Caco-2 (cell line): ENCODE measurements at regions of chr16 and their contacts with region 1.

Region 1: DNA sequence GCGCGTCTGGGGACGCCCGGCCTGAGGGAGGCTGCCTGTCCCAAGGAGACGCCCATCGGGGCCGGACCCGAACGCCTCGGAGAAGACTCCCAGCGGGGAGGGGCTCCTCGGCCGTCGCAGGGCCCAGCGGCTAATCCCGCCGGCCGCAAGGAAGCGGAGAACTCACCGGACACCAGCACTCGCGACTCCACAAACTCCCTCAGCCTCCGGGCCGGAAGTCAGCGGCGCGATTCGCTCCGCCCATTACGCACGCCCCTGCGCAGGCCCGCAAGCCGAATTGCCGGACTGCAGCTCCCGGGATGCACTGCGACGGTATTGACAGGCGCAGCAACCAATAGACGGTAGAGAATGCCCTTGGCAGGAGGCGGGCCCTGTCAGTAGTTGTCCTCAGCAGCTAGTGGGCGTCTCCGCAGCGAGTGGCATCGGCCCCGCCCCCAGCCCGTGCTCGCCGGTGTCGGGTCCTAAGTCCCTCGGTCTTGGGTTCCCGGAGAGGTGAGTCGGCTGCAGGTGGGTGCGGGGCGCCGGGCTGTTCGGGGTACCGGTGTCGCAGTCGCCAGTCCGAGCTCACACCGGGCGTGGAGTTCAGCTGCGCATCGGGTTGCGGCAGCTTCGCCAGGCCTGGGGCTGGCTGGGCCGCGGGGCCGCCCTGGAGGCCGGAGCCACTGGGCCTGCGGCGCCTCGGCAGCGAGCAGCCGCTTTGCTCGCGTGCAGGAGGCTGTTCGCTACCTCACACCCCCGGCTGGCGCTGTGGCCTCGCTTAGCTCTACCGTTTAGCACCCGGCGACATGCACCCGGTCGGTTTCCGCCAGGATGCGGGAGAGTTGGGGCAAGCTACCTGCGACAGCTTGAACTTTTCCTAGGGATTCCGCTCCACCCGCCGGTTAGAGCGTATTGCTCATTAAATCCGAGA is at the starts of genes ZNF174 and ZSCAN32:
- DNase-seq: peak; percentile 99
- H3K4me3 ChIP-seq: peak within 1 kb of the TSS; percentile 83
- H3K4me3 Mint-ChIP-seq: peak within 1 kb of the TSS; percentile 87
- H3K27ac Mint-ChIP-seq: peak within 1 kb of the TSS; percentile 79
- H3K4me1 ChIP-seq: no peaks in the 10 kb centered on the region
- H3K4me1 Mint-ChIP-seq: peaks cover 5% of the 10 kb centered on the region
- H3K27me3 ChIP-seq: no peaks in the 10 kb centered on the region
- H3K27me3 Mint-ChIP-seq: no peaks in the 10 kb centered on the region
- CTCF ChIP-seq: no peak
- total RNA-seq, gene ZNF174: 11.9 and 12.6 TPM in 2 replicates
- total RNA-seq, gene ZSCAN32: 14.1 and 16.6 TPM in 2 replicates

Region 2: GRCh38 chr16:3282730-3283524 is 118.1 kb before region 1 on chr16 and contains the start of gene ZNF263:
- CTCF ChIA-PET with region 1: no interaction called
- POLR2A ChIA-PET with region 1: interaction called, 12 read pairs
- intact Hi-C with region 1: loop called (anchors 10 kb)
- DNase-seq: peak; percentile 96
- H3K4me3 ChIP-seq: peak within 1 kb of the TSS; percentile 72
- H3K4me3 Mint-ChIP-seq: peak within 1 kb of the TSS; percentile 98
- H3K27ac Mint-ChIP-seq: peak within 1 kb of the TSS; percentile 99
- H3K4me1 ChIP-seq: peaks cover 19% of the 10 kb centered on the region
- H3K4me1 Mint-ChIP-seq: no peaks in the 10 kb centered on the region
- H3K27me3 ChIP-seq: no peaks in the 10 kb centered on the region
- H3K27me3 Mint-ChIP-seq: no peaks in the 10 kb centered on the region
- CTCF ChIP-seq: no peak
- total RNA-seq, gene ZNF263: 37.0 and 37.4 TPM in 2 replicates

Region 3: DNA sequence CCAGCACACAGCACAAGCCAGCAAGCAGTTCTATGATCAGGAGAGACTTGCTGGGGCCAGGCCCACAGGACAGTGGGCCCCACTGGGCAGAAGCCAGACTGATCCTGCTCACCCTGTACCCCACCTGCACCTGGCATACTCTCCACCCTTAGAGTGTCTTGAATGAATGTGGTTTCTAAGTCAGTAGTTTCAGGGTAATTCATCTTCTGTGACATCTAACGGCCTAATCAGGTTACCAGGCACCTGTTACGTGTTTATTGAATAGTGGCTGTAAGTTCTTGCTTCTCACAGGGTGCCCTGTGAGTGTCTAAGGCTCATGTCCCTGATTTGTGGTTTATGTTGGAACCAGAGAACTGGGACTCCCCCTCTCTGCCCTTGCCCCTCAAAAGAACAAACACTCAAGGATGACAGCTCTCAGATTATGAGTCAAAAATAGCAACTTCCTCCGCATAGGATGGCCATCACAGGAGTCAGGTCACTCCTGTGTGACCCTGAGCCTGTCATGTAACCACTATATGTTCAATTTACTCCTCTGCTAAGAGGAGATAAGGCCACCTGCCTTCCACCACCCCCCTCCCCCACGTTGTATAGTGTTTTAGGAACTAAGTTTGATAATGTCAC is 52.4 kb before region 1 on chr16:
- CTCF ChIA-PET with region 1: no interaction called
- POLR2A ChIA-PET with region 1: no interaction called
- intact Hi-C with region 1: no loop called
- DNase-seq: no peak
- H3K4me3 ChIP-seq: no peak overlapping the region
- H3K4me3 Mint-ChIP-seq: no peak overlapping the region
- H3K27ac Mint-ChIP-seq: no peak overlapping the region
- H3K4me1 ChIP-seq: no peaks in the 10 kb centered on the region
- H3K4me1 Mint-ChIP-seq: no peaks in the 10 kb centered on the region
- H3K27me3 ChIP-seq: no peaks in the 10 kb centered on the region
- H3K27me3 Mint-ChIP-seq: peaks cover 4% of the 10 kb centered on the region
- CTCF ChIP-seq: no peak

Region 4: GRCh38 chr16:3443108-3444031 is 42.3 kb after region 1 on chr16 and contains the starts of genes NAA60 and ZNF597:
- CTCF ChIA-PET with region 1: interaction called, 6 read pairs
- POLR2A ChIA-PET with region 1: interaction called, 25 read pairs
- intact Hi-C with region 1: loop called (anchors 1 kb)
- DNase-seq: peak; percentile 85 to 89
- H3K4me3 ChIP-seq: peak within 1 kb of the TSS; percentile 61
- H3K4me3 Mint-ChIP-seq: peak within 1 kb of the TSS; percentile 91
- H3K27ac Mint-ChIP-seq: peak within 1 kb of the TSS; percentile 94
- H3K4me1 ChIP-seq: no peaks in the 10 kb centered on the region
- H3K4me1 Mint-ChIP-seq: no peaks in the 10 kb centered on the region
- H3K27me3 ChIP-seq: no peaks in the 10 kb centered on the region
- H3K27me3 Mint-ChIP-seq: no peaks in the 10 kb centered on the region
- CTCF ChIP-seq: no peak
- total RNA-seq, gene NAA60: 84.9 and 92.8 TPM in 2 replicates
- total RNA-seq, gene ZNF597: 3.7 and 3.8 TPM in 2 replicates

Region 5: GRCh38 chr16:3457434-3458252 is 56.6 kb after region 1 on chr16:
- CTCF ChIA-PET with region 1: interaction called, 10 read pairs
- POLR2A ChIA-PET with region 1: interaction called, 10 read pairs
- intact Hi-C with region 1: loop called (anchors 1 kb)
- DNase-seq: peak; percentile 86 to 95
- H3K4me3 ChIP-seq: peak overlapping the region; percentile 98
- H3K4me3 Mint-ChIP-seq: peak overlapping the region; percentile 76
- H3K27ac Mint-ChIP-seq: peak overlapping the region; percentile 82
- H3K4me1 ChIP-seq: peaks cover 17% of the 10 kb centered on the region
- H3K4me1 Mint-ChIP-seq: peaks cover 37% of the 10 kb centered on the region
- H3K27me3 ChIP-seq: no peaks in the 10 kb centered on the region
- H3K27me3 Mint-ChIP-seq: no peaks in the 10 kb centered on the region
- CTCF ChIP-seq: peak in 1 of 2 experiments; percentile 54

Region 6: GRCh38 chr16:3471518-3472176 is 70.6 kb after region 1 on chr16:
- CTCF ChIA-PET with region 1: no interaction called
- POLR2A ChIA-PET with region 1: interaction called, 11 read pairs
- intact Hi-C with region 1: no loop called
- DNase-seq: no peak
- H3K4me3 ChIP-seq: no peak overlapping the region
- H3K4me3 Mint-ChIP-seq: no peak overlapping the region
- H3K27ac Mint-ChIP-seq: no peak overlapping the region
- H3K4me1 ChIP-seq: no peaks in the 10 kb centered on the region
- H3K4me1 Mint-ChIP-seq: peaks cover 11% of the 10 kb centered on the region
- H3K27me3 ChIP-seq: no peaks in the 10 kb centered on the region
- H3K27me3 Mint-ChIP-seq: no peaks in the 10 kb centered on the region
- CTCF ChIP-seq: no peak